CD14-positive monocyte (primary cell): ENCODE measurements at regions of chr1 and their contacts with region 1.

Region 1: GRCh38 chr1:231421993-231422764 is at the start of gene EGLN1:
- DNase-seq: peak; percentile 49 to 67 (median 66)
- H3K4me3 ChIP-seq: peak within 1 kb of the TSS; percentile 68 to 80 (median 71)
- H3K4me3 Mint-ChIP-seq: peak within 1 kb of the TSS; percentile 99 to 100
- H3K27ac ChIP-seq: peak within 1 kb of the TSS; percentile 14 to 67
- H3K27ac Mint-ChIP-seq: peak within 1 kb of the TSS; percentile 76 to 92 (median 88)
- H3K4me1 ChIP-seq: peaks cover 30 to 43% of the 10 kb centered on the region in 2 donors
- H3K4me1 Mint-ChIP-seq: peaks cover 45% of the 10 kb centered on the region
- H3K27me3 ChIP-seq: peaks cover 34 to 43% of the 10 kb centered on the region in 2 donors
- H3K27me3 Mint-ChIP-seq: peaks cover 30 to 34% (median 31%) of the 10 kb centered on the region in 3 donors
- CTCF ChIP-seq: peak; percentile 27
- polyA plus RNA-seq, gene EGLN1: 12.9 to 27.7 (median 23.1) TPM

Region 2: GRCh38 chr1:231348442-231348841 is 73.7 kb before region 1 on chr1:
- intact Hi-C with region 1: no loop called
- DNase-seq: no peak
- H3K4me3 ChIP-seq: no peak overlapping the region
- H3K4me3 Mint-ChIP-seq: no peak overlapping the region
- H3K27ac ChIP-seq: no peak overlapping the region
- H3K27ac Mint-ChIP-seq: no peak overlapping the region
- H3K4me1 ChIP-seq: no peaks in the 10 kb centered on the region
- H3K4me1 Mint-ChIP-seq: no peaks in the 10 kb centered on the region
- H3K27me3 ChIP-seq: no peaks in the 10 kb centered on the region
- H3K27me3 Mint-ChIP-seq: peaks cover 0 to 1% (median 0%) of the 10 kb centered on the region in 3 donors
- CTCF ChIP-seq: no peak

Region 3: DNA sequence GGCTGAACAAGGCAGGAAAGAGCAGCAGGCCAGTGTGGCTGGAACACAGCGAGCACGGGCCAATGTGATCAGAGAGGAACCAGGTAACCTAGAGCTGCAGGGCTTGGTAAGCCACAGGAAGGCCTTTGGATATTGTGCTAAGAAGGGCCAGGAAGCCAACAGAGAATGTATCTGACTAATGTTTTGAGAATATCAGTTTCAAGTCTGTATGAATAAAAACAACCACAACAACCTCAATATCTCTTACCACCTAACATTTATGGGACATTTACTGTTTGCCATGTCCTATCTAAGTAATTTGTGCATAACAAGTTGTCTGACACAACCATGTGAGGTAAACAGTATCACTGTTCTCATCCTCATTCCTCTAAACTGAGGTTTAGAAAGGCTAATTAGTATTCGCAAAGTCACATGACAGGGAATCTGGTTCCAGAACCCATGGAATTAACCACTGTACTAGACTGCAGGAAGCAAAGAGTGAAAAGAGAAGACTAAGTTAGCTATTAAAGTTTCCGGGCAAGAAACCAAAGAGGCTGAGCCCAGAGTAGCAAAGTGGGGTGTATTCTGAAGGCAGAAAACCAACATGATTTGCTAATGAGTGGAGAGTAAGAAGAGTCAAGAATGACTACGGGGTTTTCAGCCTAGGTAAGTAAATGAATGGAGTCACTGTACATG is 45.2 kb before region 1 on chr1:
- intact Hi-C with region 1: loop called in 1 of 2 experiments (anchors 5 kb)
- DNase-seq: no peak
- H3K4me3 ChIP-seq: no peak overlapping the region
- H3K4me3 Mint-ChIP-seq: no peak overlapping the region
- H3K27ac ChIP-seq: no peak overlapping the region
- H3K27ac Mint-ChIP-seq: peak overlapping the region in 3 of 7 donors; percentile 5 to 70 (median 27)
- H3K4me1 ChIP-seq: peaks cover 8 to 10% of the 10 kb centered on the region in 2 donors
- H3K4me1 Mint-ChIP-seq: peaks cover 29% of the 10 kb centered on the region
- H3K27me3 ChIP-seq: no peaks in the 10 kb centered on the region
- H3K27me3 Mint-ChIP-seq: peaks cover 0 to 2% (median 0%) of the 10 kb centered on the region in 3 donors
- CTCF ChIP-seq: no peak

Region 4: DNA sequence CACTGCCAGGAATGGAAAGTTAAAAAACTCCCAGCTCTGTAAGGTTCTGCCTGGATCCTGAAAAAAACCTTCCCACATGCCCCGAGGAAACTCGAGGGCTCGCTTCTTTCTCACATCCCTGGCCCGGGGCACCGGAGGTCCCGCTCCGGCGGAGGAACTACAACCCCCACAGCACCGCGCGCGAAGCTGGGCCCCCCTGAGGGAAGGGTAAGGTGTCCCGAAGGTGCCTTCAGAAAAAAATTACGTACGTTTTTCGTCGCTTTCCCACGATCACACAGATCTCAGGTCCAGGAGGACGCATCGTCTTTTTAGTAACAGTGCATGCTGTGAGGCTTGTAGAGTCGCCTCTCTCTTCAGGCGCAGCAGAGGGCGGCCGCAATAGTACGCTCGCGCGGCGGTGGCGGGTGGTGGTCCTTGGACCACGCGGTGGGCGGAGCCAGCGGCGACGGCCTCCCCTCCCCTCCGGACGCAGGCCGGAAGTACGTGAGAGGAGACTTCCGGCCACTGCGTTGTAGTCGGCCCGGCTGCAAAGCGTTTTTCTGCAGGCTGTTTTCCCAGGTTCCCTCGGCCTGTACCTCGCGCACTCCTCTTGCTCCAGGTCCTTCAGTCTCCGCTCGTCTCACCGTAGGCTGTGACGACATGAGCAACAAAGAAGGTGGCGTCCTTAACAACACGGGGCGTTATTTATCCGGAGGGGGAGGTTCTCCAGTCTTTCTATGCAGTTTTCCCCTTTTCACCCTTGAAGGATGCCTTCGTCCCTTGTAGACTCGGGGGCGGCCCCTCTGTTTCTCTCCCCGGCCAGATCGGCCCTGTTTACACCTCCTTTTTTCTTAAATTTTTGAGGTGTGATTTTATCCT is 106.2 kb after region 1 on chr1 and contains the start of gene TSNAX:
- intact Hi-C with region 1: loop called (anchors 2 to 10 kb)
- DNase-seq: peak; percentile 89 to 94 (median 91)
- H3K4me3 ChIP-seq: peak within 1 kb of the TSS; percentile 54 to 84 (median 80)
- H3K4me3 Mint-ChIP-seq: peak within 1 kb of the TSS; percentile 92 to 96
- H3K27ac ChIP-seq: peak within 1 kb of the TSS; percentile 87 to 95
- H3K27ac Mint-ChIP-seq: peak within 1 kb of the TSS; percentile 99 to 100 (median 100)
- H3K4me1 ChIP-seq: peaks cover 58 to 67% of the 10 kb centered on the region in 2 donors
- H3K4me1 Mint-ChIP-seq: peaks cover 60% of the 10 kb centered on the region
- H3K27me3 ChIP-seq: no peaks in the 10 kb centered on the region
- H3K27me3 Mint-ChIP-seq: peaks cover 0 to 2% (median 1%) of the 10 kb centered on the region in 3 donors
- CTCF ChIP-seq: no peak
- polyA plus RNA-seq, gene TSNAX: 15.6 to 86.9 (median 82.0) TPM

Region 5: DNA sequence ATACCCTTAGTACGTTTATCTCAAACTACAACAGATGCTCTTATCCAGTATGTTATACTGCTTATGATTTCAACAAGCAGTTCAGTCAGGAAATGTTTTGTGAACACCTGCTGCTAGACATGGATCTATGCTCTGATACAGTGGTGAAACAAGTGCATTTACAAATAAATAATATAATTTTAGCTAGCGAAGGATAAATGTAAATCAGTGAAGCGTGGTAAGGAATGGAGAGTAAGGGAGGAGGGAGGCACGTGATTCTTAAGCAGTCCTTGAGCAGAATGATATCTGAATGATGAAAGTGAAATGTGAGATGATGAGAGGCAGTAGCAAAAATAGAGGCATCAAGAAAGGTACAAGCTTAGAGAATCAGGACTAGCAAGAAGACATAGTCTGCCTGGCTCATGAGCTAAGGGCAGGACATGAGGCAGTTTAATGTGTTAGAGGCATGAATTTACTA is 112.6 kb after region 1 on chr1:
- intact Hi-C with region 1: loop called (anchors 2 to 10 kb)
- DNase-seq: no peak
- H3K4me3 ChIP-seq: no peak overlapping the region
- H3K4me3 Mint-ChIP-seq: no peak overlapping the region
- H3K27ac ChIP-seq: no peak overlapping the region
- H3K27ac Mint-ChIP-seq: peak overlapping the region in 1 of 7 donors; percentile 2
- H3K4me1 ChIP-seq: peaks cover 25 to 35% of the 10 kb centered on the region in 2 donors
- H3K4me1 Mint-ChIP-seq: peaks cover 41% of the 10 kb centered on the region
- H3K27me3 ChIP-seq: no peaks in the 10 kb centered on the region
- H3K27me3 Mint-ChIP-seq: no peaks in the 10 kb centered on the region
- CTCF ChIP-seq: no peak